Dendritic cell treated with granulocyte-macrophage colony-stimulating factor and Interleukin-4, amounts not matched to agents 40 ng/mL and 50 ng/mL, for 4 days (primary cell): ENCODE measurements at regions of chr17 and their contacts with region 1.

Region 1: GRCh38 chr17:58517734-58518609 is 3.5 kb upstream of the MTMR4 start:
- H3K4me3 Mint-ChIP-seq: peak overlapping the region; percentile 85
- H3K27ac Mint-ChIP-seq: peak overlapping the region; percentile 97
- H3K4me1 Mint-ChIP-seq: peaks cover 47% of the 10 kb centered on the region
- H3K27me3 Mint-ChIP-seq: peaks cover 10% of the 10 kb centered on the region

Region 2: GRCh38 chr17:58224315-58224714 is 293.7 kb before region 1 on chr17:
- intact Hi-C with region 1: no loop called
- H3K4me3 Mint-ChIP-seq: no peak overlapping the region
- H3K27ac Mint-ChIP-seq: no peak overlapping the region
- H3K4me1 Mint-ChIP-seq: peaks cover 15% of the 10 kb centered on the region
- H3K27me3 Mint-ChIP-seq: peaks cover 27% of the 10 kb centered on the region

Region 3: DNA sequence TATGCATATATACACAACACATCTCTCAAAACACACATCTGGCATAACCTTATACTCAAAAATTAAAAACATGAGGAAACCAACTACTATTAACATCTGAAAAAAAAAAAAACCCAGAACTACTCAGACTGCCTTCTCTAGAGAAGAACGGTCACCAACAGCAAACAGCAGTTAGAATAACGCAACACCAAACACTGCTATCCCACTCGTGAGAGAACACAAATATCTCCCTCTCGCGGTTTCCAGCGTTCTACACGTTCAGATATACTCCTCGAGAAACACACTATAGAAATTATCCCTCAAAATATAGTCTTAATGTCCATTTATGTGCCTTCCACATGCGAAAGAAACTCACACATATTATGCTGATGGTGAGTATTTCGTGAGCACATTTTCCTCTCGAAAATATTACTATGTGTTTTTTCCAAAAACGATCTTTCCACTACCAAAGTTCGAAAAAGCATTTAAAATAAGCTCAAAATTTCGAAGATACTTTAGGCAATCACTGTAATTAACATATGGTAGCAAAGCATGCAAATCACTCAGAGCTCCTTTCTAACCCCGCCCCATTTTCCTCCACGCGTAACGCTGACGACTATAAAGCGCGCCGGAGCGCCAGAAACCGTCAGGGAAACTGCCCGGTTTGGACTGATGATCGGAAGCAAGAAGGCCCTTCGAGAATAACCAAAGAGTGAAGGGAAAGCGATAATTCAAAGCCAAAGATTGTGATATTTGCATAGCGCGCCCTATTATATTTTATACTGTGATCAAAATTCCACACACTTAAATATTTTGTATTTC is 113.8 kb after region 1 on chr17:
- intact Hi-C with region 1: loop called (anchors 1 kb)
- H3K4me3 Mint-ChIP-seq: no peak overlapping the region
- H3K27ac Mint-ChIP-seq: no peak overlapping the region
- H3K4me1 Mint-ChIP-seq: peaks cover 25% of the 10 kb centered on the region
- H3K27me3 Mint-ChIP-seq: peaks cover 2% of the 10 kb centered on the region